Activated T-helper 1 cell treated with anti-CD3 and anti-CD28 coated beads, Interleukin-12 subunit alpha, Interleukin-12 subunit beta, Interleukin-2, Interleukin-4 antibody, amounts not matched to agents 30 ng/mL and 10 ng/mL and 1 ng/mL, durations not matched to agents 14 hours and 24 hours and 36 hours (primary cell): ENCODE measurements at regions of chr15 and their contacts with region 1.

Region 1: DNA sequence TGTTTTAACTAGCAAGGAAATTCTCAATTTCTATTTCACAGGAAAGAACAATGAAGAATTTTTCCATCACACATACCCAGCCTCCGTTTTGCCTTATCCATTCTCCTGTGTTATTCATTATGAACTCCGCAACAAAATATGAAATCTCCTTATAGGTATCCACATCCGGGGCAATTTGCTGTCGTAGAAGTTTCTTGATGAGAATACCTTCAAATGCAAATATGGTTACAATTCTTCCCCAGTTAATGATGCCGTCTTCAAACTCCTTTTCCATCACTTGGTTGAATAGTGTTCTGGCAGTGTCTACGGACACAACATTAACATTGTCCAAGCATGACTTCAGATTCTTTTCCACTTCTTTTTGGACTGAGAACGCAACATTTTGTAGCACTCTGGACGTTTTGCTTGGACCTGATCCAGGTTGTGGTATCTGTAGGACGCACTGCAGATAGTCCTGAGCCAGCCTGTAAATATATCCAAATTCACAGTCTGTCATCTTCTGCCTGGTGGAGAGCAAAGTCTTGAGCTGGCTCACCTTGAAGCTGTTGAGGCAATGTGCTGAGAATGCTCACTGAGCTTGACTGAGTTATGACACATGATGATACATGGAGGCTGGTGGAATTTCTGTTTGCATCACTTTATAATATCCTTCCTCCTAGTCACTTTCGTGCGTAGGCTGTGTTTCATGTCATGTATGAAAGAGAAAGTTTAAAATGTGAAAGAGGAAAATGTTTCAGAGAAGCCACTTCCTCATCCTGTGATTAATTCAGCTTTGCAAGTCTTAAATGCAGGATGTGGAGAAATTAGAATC is at the start of gene BCL2A1:
- DNase-seq: peak; percentile 64
- H3K4me3 Mint-ChIP-seq: peak within 1 kb of the TSS; percentile 96
- H3K27ac Mint-ChIP-seq: peak within 1 kb of the TSS; percentile 96
- H3K4me1 Mint-ChIP-seq: peaks cover 54% of the 10 kb centered on the region
- H3K27me3 Mint-ChIP-seq: no peaks in the 10 kb centered on the region
- total RNA-seq, gene BCL2A1: 91.8 and 95.0 TPM in 2 replicates

Region 2: DNA sequence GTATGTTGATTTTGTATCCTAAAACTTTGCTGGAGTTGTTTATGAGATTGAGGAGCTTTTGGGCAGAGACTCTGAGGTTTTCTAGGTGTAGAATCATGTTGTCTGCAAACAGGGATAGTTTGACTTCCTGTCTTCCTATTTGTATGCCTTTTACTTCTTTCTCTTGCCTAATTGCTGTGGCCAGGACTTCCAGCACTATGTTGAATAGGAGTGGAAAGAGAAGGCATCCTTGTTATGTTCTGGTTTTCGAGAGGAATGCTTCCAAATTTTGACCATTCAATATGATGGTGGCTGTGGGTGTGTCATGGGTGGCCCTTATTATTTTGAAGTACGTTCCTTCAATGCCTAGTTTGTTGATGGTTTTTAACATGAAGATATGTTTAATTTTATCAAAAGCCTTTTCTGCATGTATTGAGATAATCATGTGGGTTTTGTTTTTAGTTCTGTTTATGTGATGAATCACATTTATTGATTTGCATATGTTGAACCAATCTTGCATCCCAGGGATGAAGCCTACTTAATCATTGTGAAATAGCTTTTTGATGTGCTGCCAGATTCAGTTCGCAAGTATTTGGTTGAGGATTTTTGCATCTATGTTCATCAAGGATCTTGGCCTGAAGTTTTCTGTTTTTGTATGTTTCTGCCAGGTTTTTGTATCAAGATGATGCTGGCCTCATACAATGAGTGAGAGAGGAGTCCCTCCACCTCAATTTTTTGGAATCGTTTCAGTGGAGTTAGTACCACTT is 350.5 kb before region 1 on chr15:
- intact Hi-C with region 1: no loop called
- DNase-seq: no peak
- H3K4me3 Mint-ChIP-seq: no peak overlapping the region
- H3K27ac Mint-ChIP-seq: no peak overlapping the region
- H3K4me1 Mint-ChIP-seq: no peaks in the 10 kb centered on the region
- H3K27me3 Mint-ChIP-seq: peaks cover 13% of the 10 kb centered on the region

Region 3: GRCh38 chr15:79872358-79873017 is 98.3 kb before region 1 on chr15:
- intact Hi-C with region 1: loop called (anchors 1 kb)
- DNase-seq: peak; percentile 39
- H3K4me3 Mint-ChIP-seq: no peak overlapping the region
- H3K27ac Mint-ChIP-seq: peak overlapping the region; percentile 11
- H3K4me1 Mint-ChIP-seq: peaks cover 29% of the 10 kb centered on the region
- H3K27me3 Mint-ChIP-seq: no peaks in the 10 kb centered on the region

Region 4: GRCh38 chr15:79896637-79897379 is 74.0 kb before region 1 on chr15 and contains the start of gene MTHFS:
- intact Hi-C with region 1: loop called (anchors 1 kb)
- DNase-seq: peak; percentile 75
- H3K4me3 Mint-ChIP-seq: peak within 1 kb of the TSS; percentile 97
- H3K27ac Mint-ChIP-seq: peak within 1 kb of the TSS; percentile 96
- H3K4me1 Mint-ChIP-seq: peaks cover 44% of the 10 kb centered on the region
- H3K27me3 Mint-ChIP-seq: no peaks in the 10 kb centered on the region
- total RNA-seq, gene MTHFS: 32.2 and 34.0 TPM in 2 replicates

Region 5: DNA sequence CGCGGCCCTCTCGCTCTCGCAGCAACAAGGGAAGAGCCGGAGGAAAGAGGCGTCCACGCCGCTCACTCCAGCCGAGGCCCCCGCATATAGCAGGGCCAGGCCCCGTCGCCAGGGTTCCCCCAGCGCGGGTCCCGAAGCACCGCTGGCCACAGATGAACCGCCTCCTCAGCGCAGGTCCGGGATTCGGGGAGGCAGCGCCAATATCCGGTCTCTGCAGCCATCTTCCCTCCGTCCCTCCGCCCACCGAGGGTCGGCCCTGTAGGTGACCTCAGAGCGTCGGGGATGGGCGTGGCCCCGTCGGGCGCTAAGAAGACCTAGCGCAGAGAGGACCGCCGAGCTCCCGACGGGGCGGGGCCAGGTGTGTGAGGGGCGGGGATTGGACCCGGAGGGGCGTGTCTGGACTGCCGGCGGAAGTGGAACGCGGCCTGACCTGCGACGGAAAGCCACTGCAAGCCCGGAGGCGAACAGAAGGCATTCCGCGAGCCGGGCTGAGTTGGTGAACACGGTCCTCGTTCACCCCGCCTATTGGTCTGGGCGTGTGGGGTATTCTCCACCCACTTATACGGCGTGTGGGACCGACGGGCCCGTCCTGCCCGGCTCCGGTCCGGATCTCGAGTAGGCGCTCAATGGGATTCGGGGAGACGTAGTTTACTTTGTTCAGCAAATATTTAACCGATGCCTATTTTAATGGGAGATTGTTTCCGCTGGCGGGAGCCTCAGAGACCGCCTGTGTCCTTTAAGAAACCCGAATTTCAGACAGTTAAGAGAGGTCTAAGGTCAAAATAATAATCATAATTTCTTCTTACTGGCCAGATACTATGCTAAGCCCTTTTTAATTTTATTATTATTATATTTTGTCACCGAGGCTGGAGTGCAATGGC is 47.1 kb before region 1 on chr15:
- intact Hi-C with region 1: loop called (anchors 1 kb)
- DNase-seq: peak; percentile 99
- H3K4me3 Mint-ChIP-seq: peak overlapping the region; percentile 92
- H3K27ac Mint-ChIP-seq: peak overlapping the region; percentile 95
- H3K4me1 Mint-ChIP-seq: peaks cover 16% of the 10 kb centered on the region
- H3K27me3 Mint-ChIP-seq: no peaks in the 10 kb centered on the region

Region 6: DNA sequence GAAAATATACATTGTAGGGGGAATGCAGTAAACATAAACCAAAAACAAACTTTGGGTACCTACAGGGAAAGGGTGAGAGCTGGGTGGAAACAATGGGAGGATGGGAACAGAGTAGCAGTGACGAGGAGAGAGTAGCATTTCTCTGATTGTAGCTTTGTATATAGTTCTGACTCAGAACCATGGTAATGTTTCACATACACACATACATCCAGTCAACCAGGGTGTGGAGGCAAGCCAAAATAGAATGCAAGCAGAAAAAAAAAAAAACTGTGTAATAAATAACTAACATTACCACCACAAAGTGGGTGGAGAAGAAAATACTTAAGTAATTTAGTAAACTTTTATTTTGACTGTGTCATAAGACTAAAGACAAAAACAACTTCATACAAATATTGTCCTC is 27.0 kb before region 1 on chr15:
- intact Hi-C with region 1: loop called (anchors 1 kb)
- DNase-seq: no peak
- H3K4me3 Mint-ChIP-seq: no peak overlapping the region
- H3K27ac Mint-ChIP-seq: no peak overlapping the region
- H3K4me1 Mint-ChIP-seq: peaks cover 33% of the 10 kb centered on the region
- H3K27me3 Mint-ChIP-seq: peaks cover 10% of the 10 kb centered on the region

Region 7: DNA sequence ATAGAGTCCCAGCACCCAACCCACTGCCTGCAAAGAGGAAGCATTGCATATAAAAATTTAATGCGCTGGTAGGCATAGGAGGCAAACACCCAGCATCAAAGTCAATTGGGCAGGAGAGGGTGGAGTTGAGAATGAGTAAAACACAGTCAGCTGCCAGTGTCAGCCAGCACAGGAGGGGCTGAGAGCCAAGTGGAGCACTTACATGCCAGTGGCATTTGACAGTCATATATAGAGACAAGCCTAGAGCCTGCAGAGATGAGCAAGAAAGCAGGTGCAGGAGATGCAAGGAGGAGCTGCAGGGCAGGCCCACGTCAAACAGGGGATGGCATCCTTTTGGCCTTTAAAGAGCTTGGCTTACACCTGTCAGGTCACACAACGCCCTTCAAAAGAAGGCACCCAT is 61.0 kb after region 1 on chr15:
- intact Hi-C with region 1: loop called (anchors 2 kb)
- DNase-seq: peak; percentile 16
- H3K4me3 Mint-ChIP-seq: no peak overlapping the region
- H3K27ac Mint-ChIP-seq: peak overlapping the region; percentile 85
- H3K4me1 Mint-ChIP-seq: peaks cover 42% of the 10 kb centered on the region
- H3K27me3 Mint-ChIP-seq: no peaks in the 10 kb centered on the region

Region 8: DNA sequence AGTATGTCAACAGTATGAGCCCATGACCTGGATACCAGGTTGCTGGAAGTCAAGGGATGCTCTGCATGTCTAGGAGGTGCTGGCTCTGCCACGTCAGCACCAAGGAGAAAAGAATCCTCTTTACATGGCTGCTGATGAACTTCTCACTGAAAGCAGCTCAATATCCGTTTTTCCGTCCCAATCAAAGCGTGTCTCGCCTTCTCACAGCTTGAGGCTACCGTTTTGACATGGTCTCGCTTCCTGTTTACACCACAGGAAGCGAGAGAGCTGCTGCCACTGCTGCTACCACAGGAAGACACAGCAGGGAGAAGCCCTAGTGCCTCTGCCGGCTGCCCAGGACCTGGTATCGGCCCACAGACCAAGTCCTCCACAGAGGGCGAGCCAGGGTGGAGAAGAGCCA is 1325.8 kb after region 1 on chr15:
- intact Hi-C with region 1: loop called (anchors 2 kb)
- DNase-seq: peak; percentile 77
- H3K4me3 Mint-ChIP-seq: peak overlapping the region; percentile 97
- H3K27ac Mint-ChIP-seq: peak overlapping the region; percentile 94
- H3K4me1 Mint-ChIP-seq: peaks cover 95% of the 10 kb centered on the region
- H3K27me3 Mint-ChIP-seq: no peaks in the 10 kb centered on the region